Tibial artery (tissue), 4 donors: ENCODE measurements at regions of chr14 and their contacts with region 1.

Region 1: DNA sequence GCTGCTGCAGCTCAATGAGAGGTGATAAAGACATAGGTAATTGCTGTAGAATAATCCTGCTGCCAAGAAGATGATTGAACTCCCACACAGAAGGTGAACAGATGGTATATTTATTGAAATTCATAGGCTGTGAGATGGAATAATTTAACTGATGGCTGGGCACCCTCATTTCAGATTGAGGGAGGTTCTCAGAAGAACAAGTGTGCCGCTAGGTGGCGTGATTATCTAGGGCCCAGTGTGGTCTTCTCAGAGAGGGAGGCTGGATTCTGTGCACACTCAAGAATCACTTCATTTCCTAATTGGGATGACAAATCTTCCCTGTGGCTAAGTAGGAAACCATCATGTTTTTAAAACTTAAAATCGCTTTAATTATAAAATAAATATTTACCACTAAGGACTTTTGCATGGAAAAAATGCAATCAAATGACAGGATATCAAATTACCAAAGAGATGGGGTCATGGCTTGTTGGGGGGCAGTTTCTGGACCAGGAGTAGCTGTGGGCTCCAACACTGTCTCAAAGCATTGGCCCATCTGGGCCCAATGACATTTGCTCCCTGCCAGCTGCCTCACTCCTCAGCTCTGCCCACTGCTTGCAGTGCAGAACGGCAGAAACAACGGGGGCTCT is 132.3 kb downstream of the SNAPC1 start:
- DNase-seq: peak in 1 of 2 donors; percentile 28
- H3K4me3 ChIP-seq: no peak overlapping the region
- H3K27ac ChIP-seq: no peak overlapping the region
- H3K4me1 ChIP-seq: no peaks in the 10 kb centered on the region
- H3K27me3 ChIP-seq: peaks cover 0 to 6% of the 10 kb centered on the region in 2 donors
- CTCF ChIP-seq: peak in 1 of 2 experiments; percentile 25

Region 2: DNA sequence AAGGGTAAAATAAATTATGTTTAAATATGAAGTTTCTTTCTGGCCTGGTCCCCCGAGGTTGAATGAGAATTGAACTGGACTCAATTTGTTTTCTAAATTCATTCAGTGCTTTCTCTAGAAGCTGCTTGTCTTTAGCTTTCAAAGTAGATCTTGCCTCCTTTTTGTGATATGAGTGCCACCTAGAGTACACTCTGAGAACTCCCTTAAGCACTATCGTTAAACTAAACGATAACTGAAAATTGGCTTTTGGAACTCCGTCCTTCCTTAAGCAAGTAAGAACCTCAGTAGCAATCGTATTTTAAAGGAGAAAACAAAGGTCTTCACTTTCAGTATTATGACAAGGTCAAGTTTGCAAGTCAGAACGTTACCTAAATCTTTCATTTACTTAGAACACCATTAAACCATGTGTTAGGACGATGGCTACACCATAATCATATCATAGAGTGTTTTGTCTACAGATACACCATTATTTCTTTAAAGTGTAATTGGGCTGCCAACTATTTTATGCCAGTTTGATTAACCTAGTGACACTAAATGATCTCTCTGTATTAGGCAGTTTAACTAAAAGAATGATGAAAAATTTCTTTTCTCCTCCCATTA is 232.4 kb after region 1 on chr14:
- intact Hi-C with region 1: loop called (anchors 10 kb)
- DNase-seq: no peak
- H3K4me3 ChIP-seq: no peak overlapping the region
- H3K27ac ChIP-seq: no peak overlapping the region
- H3K4me1 ChIP-seq: no peaks in the 10 kb centered on the region
- H3K27me3 ChIP-seq: peaks cover 0 to 7% of the 10 kb centered on the region in 2 donors
- CTCF ChIP-seq: peak; percentile 56 to 59